ENCODE measurements at regions of chr6 and their contacts with region 1.

Region 1: GRCh38 chr6:30686908-30687658 is 638 bp upstream of the PPP1R18 start:
- DNase-seq: peak; percentile 98
- H3K4me3 ChIP-seq: peak overlapping the region; percentile 63 to 87 (median 72)
- H3K27ac ChIP-seq: peak overlapping the region; percentile 94 to 99 (median 98)
- H3K4me1 ChIP-seq: peaks cover 0 to 80% (median 73%) of the 10 kb centered on the region in 4 donors
- H3K27me3 ChIP-seq: no peaks in the 10 kb centered on the region
- CTCF ChIP-seq: no peak
- EP300 ChIP-seq: peak in 2 of 4 donors; percentile 68 to 72
- POLR2A ChIP-seq: peak; percentile 26 to 47

Region 2: DNA sequence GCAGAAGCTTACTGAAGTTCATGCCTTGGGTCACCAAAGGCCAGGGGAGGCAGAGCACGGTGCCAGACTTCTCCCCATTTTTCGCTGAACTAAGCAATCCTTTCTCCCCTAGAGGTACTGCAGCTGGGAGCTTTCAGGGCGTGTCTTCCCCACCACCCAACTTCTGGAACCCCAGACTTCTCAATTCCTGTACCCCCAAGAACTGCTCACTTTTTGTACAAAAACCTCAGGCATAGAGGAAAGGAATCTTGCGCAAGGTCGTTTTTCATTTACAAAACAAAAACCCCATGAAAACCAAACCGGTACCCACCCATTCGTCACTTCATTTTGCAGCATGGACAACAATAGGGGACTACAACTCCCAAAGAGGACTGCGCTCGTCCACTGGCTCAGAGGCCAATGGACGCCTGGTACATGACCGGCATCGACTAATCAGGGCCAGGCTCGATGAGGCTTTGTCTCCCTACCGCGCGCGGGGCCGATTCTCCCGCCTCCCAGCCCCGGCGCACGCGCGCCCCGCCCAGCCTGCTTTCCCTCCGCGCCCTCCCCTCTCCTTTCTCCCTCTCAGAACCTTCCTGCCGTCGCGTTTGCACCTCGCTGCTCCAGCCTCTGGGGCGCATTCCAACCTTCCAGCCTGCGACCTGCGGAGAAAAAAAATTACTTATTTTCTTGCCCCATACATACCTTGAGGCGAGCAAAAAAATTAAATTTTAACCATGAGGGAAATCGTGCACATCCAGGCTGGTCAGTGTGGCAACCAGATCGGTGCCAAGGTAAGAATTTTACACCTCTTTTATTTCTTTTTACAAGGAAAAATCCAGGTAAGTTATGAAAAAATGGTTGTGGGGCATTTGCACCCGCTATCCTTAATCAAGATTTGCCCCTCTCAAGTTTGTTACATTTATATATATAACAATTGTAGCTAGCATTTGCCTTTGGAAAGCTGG is 33.0 kb after region 1 on chr6 and contains the start of gene TUBB:
- intact Hi-C with region 1: loop called (anchors 1 kb)
- DNase-seq: peak; percentile 99
- H3K4me3 ChIP-seq: peak within 1 kb of the TSS; percentile 70 to 80 (median 78)
- H3K27ac ChIP-seq: peak within 1 kb of the TSS; percentile 95 to 98 (median 96)
- H3K4me1 ChIP-seq: peaks cover 0 to 61% (median 46%) of the 10 kb centered on the region in 4 donors
- H3K27me3 ChIP-seq: no peaks in the 10 kb centered on the region
- CTCF ChIP-seq: peak in 2 of 4 experiments; percentile 35 to 39
- EP300 ChIP-seq: peak in 1 of 4 donors; percentile 17
- POLR2A ChIP-seq: peak; percentile 95 to 97
- total RNA-seq, gene TUBB: 245 to 287 (median 267) TPM

Region 3: GRCh38 chr6:30990422-30991086 is 303.5 kb after region 1 on chr6:
- intact Hi-C with region 1: no loop called
- DNase-seq: no peak
- H3K4me3 ChIP-seq: no peak overlapping the region
- H3K27ac ChIP-seq: no peak overlapping the region
- H3K4me1 ChIP-seq: no peaks in the 10 kb centered on the region
- H3K27me3 ChIP-seq: no peaks in the 10 kb centered on the region
- CTCF ChIP-seq: no peak
- EP300 ChIP-seq: no peak
- POLR2A ChIP-seq: no peak